ENCODE measurements at regions of chr3 and their contacts with region 1.

Region 1: DNA sequence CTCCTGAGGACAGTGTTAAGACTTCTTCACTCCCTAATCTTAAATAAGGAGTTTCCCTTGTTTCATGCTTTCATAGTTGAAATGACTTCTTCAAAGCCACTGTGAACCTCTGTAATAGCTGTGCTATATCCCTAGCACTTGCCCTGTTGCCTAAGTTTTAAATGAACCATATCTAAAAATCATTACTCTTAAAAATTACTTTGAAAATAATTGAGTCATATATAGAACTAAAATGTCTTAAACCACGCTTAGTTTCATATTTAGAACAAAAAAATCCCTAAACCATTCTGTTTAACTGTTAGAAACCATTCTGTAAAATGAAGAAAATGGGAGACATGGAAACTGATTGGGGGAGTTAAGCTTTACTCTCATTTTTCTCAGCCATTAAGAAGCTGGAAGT is 29.8 kb downstream of the DNAJC19 start:
- DNase-seq: no peak
- ATAC-seq: no peak
- H3K4me3 ChIP-seq: no peak overlapping the region
- H3K27ac ChIP-seq: no peak overlapping the region
- H3K4me1 ChIP-seq: peaks cover 13% of the 10 kb centered on the region; the same call in 1 of the 2 replicates
- H3K27me3 ChIP-seq: no peaks in the 10 kb centered on the region
- CTCF ChIP-seq: no peak
- EP300 ChIP-seq: no peak
- POLR2A ChIP-seq: no peak
- RAD21 ChIP-seq: no peak

Region 2: GRCh38 chr3:180802837-180803236 is 156.9 kb before region 1 on chr3:
- CTCF ChIA-PET with region 1: no interaction called
- POLR2A ChIA-PET with region 1: no interaction called
- in situ Hi-C with region 1: no loop called
- intact Hi-C with region 1: loop called (anchors 10 kb)
- DNase-seq: peak; percentile 28
- ATAC-seq: peak; percentile 58; the same call in 2 of the 3 replicates
- H3K4me3 ChIP-seq: no peak overlapping the region
- H3K27ac ChIP-seq: no peak overlapping the region
- H3K4me1 ChIP-seq: no peaks in the 10 kb centered on the region
- H3K27me3 ChIP-seq: no peaks in the 10 kb centered on the region
- CTCF ChIP-seq: peak; percentile 59
- EP300 ChIP-seq: no peak
- POLR2A ChIP-seq: no peak
- RAD21 ChIP-seq: peak; percentile 22; the same call in 1 of the 2 replicates

Region 3: DNA sequence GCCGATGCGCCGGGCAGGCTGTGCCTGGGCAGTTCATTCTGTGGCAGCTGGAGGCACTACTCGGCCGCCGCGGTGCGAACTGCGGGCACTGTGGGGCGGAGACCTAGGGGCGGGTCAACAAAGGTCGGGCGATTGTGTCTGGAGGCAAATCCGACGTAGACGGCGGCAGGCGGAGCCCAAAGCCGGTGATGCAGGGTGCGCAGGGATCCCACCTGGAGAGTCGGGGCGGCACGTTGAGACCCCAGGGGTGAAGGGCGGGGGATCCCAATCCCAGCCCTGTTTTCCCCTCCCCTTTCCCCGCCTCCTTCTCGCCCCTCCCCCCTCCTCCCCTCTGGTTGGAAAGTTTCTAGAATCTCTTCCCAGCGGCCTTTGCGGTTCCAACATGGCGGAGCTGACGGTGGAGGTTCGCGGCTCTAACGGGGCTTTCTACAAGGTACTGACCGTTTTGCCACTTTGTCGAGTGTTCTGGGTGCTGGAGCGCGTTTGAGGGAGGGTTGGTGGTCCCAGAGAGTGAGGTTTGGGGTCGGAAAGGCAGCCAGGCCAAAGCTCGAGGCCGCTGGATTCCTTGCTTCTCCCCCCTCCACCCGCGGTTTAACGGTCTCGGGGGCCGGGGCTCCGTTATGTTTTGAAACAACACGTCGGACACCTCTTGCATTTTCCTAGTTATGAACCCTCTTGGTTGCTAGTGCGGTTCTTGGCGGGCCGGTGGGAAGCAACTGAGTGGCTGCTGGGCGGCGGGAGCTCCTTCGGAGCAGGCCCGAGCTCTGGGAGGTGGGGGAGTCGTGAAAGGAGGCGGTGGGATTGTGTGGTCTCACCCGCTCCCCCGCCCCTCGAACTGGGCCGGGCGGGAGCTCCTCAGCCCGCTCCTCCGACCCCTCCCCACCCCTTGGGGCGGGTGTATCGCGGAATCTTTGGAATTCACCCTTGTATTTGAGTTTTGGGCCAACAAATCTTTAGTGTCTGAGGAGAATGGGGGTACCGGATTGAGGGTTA is 47.1 kb before region 1 on chr3 and contains the start of gene FXR1:
- CTCF ChIA-PET with region 1: no interaction called
- POLR2A ChIA-PET with region 1: no interaction called
- in situ Hi-C with region 1: no loop called
- intact Hi-C with region 1: loop called (anchors 2 kb)
- DNase-seq: peak; percentile 84
- ATAC-seq: peak; percentile 99
- H3K4me3 ChIP-seq: peak within 1 kb of the TSS; percentile 99 to 100 (median 99)
- H3K27ac ChIP-seq: peak within 1 kb of the TSS; percentile 98
- H3K4me1 ChIP-seq: peaks cover 43% of the 10 kb centered on the region
- H3K27me3 ChIP-seq: no peaks in the 10 kb centered on the region; a peak in 1 of 5 replicates
- CTCF ChIP-seq: peak; percentile 70
- EP300 ChIP-seq: peak in 1 of 2 experiments; percentile 44; a peak in 2 of 4 replicates
- POLR2A ChIP-seq: peak; percentile 79 to 92
- RAD21 ChIP-seq: peak; percentile 56; the same call in 1 of the 2 replicates
- total RNA-seq, gene FXR1: 132 and 205 TPM in 2 replicates

Region 4: DNA sequence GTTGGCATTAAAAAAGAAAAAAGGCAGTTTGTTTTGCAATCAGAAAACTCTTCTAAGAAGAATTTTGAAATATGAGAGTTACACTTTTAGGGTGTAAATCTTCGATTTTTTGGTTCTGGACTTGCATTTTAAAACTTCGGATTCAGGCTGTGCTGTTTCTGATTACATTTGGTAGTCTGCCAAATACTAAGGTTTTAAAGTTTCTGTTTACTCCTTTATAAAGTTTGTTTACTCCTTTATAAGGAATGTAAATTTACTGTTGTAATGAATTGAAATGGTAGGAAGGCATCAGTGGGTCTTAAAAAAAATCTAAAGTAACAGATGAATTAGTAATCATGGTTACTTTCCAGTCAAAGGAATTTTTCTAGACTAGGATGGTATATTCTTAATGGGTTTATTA is 33.2 kb before region 1 on chr3:
- CTCF ChIA-PET with region 1: no interaction called
- POLR2A ChIA-PET with region 1: no interaction called
- in situ Hi-C with region 1: no loop called
- intact Hi-C with region 1: no loop called
- DNase-seq: no peak
- ATAC-seq: no peak
- H3K4me3 ChIP-seq: no peak overlapping the region
- H3K27ac ChIP-seq: no peak overlapping the region
- H3K4me1 ChIP-seq: peaks cover 47% of the 10 kb centered on the region
- H3K27me3 ChIP-seq: no peaks in the 10 kb centered on the region
- CTCF ChIP-seq: no peak
- EP300 ChIP-seq: no peak
- POLR2A ChIP-seq: no peak
- RAD21 ChIP-seq: no peak

Region 5: GRCh38 chr3:180947761-180948633 is 11.7 kb before region 1 on chr3:
- CTCF ChIA-PET with region 1: no interaction called
- POLR2A ChIA-PET with region 1: no interaction called
- in situ Hi-C with region 1: no loop called
- intact Hi-C with region 1: no loop called
- DNase-seq: no peak
- ATAC-seq: no peak
- H3K4me3 ChIP-seq: no peak overlapping the region
- H3K27ac ChIP-seq: no peak overlapping the region
- H3K4me1 ChIP-seq: no peaks in the 10 kb centered on the region
- H3K27me3 ChIP-seq: no peaks in the 10 kb centered on the region
- CTCF ChIP-seq: no peak
- EP300 ChIP-seq: no peak
- POLR2A ChIP-seq: no peak
- RAD21 ChIP-seq: no peak

Region 6: GRCh38 chr3:180973543-180973942 is 13.9 kb after region 1 on chr3:
- CTCF ChIA-PET with region 1: no interaction called
- POLR2A ChIA-PET with region 1: no interaction called
- in situ Hi-C with region 1: no loop called
- intact Hi-C with region 1: loop called (anchors 2 kb)
- DNase-seq: no peak
- ATAC-seq: no peak
- H3K4me3 ChIP-seq: no peak overlapping the region
- H3K27ac ChIP-seq: no peak overlapping the region
- H3K4me1 ChIP-seq: no peaks in the 10 kb centered on the region
- H3K27me3 ChIP-seq: no peaks in the 10 kb centered on the region; a peak in 1 of 5 replicates
- CTCF ChIP-seq: no peak
- EP300 ChIP-seq: no peak
- POLR2A ChIP-seq: no peak
- RAD21 ChIP-seq: no peak